Testis (tissue), 5 donors: ENCODE measurements at regions of chr13 and their contacts with region 1.

Region 1: GRCh38 chr13:48580185-48580803 is 47.4 kb upstream of the RCBTB2 start:
- DNase-seq: peak; percentile 91
- H3K4me3 ChIP-seq: no peak overlapping the region
- H3K27ac ChIP-seq: no peak overlapping the region
- H3K4me1 ChIP-seq: no peaks in the 10 kb centered on the region
- H3K27me3 ChIP-seq: no peaks in the 10 kb centered on the region
- CTCF ChIP-seq: peak; percentile 66 to 85 (median 73)
- POLR2A ChIP-seq: no peak

Region 2: DNA sequence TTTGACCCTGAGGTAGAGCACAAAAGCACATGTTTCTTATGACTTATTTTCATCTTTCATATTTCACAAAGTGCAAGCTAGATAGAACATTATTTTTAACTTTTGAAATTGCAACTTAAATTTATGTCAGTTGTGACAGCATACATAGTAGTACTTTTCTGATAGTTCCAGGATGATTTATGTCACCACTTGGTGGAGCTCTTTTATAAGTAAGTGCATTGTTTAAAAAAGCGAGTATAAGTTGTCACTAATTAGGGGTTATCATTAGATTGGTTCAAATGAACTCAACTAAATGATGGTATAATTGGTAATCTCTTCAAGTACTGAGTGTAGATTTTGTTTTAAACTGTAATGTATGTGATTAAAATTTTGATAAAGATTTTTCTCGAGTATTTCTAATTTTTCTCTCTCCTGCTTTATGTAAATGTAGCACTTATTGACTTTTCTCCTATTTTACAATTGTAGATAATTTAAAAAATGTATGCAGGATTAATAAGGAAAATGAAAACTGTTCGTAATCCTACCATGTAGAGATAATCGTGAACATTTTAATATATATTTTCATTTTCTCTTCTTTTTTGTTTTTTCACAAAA is 245.7 kb before region 1 on chr13:
- intact Hi-C with region 1: loop called (anchors 10 kb)
- DNase-seq: no peak
- H3K4me3 ChIP-seq: no peak overlapping the region
- H3K27ac ChIP-seq: no peak overlapping the region
- H3K4me1 ChIP-seq: no peaks in the 10 kb centered on the region
- H3K27me3 ChIP-seq: no peaks in the 10 kb centered on the region
- CTCF ChIP-seq: peak; percentile 14 to 53 (median 22)
- POLR2A ChIP-seq: no peak

Region 3: DNA sequence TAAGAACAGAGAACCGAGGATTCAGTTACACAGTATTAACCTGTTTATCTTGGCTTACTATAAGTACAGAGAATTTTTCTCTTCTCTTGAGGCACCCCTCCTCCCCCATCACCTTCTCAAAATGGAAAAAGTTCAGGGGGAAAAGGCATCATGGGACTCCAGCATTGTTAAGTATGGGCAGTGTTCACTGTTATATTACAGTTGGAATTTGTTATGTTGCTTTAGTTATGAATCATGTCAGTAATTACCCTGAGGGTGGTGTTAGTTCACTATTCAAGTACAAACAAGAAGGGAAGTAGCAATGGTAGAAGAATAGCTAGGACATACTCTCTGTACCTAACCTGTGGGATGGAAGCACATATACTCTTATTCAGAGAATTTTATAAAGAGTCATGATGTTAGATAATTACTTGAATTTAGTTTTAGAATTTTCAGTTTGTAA is 179.4 kb before region 1 on chr13:
- intact Hi-C with region 1: loop called (anchors 10 kb)
- DNase-seq: no peak
- H3K4me3 ChIP-seq: no peak overlapping the region
- H3K27ac ChIP-seq: peak overlapping the region in 1 of 2 donors; percentile 69
- H3K4me1 ChIP-seq: peaks cover 25% of the 10 kb centered on the region
- H3K27me3 ChIP-seq: no peaks in the 10 kb centered on the region
- CTCF ChIP-seq: no peak
- POLR2A ChIP-seq: no peak